ENCODE measurements at regions of chr19 and their contacts with region 1.

Region 1: DNA sequence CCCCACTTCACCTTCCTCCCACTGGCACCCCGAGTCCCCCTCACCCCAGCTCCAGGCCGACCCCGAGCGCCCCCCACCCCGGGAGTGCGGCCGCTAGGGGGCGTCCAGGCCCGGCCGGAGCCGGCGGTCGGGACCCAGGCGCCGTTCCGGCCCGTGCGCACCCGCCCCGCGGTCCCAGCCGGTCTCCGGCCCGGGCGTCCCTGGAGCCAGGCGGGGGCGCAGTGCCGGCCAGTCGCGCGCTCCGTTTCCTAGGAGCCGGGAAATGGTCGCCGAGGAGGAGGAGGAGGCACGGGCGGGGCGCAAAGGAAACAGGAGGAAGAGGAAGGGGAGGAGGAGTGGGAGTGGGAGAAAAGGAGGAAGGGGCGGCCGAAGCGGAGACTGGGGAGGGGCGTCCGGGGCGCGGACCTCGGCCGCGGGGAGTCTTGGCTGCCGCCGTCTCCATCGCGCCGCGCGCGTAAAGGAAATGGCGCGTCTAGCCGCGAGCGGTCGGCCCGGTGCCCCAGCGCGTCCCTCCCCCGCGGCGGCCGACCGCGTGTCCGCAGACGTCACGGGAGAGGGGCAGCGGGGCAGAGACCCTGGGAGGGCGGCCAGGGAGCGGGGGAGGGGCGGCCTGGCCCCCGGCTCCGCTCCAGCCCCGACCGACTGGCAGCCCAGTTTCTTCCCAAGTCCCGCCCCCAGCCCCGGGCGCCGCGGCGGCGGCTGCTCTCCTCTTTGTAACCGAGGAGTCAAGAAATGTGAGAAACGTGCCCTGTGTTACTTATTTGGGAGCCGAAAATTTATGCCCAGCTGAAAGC is 1.1 kb upstream of the KCTD15 start:
- DNase-seq: peak; percentile 64
- H3K4me3 Mint-ChIP-seq: peak overlapping the region; percentile 71
- H3K27ac Mint-ChIP-seq: peak overlapping the region; percentile 63
- H3K4me1 Mint-ChIP-seq: peaks cover 17% of the 10 kb centered on the region
- H3K27me3 Mint-ChIP-seq: peaks cover 28% of the 10 kb centered on the region

Region 2: GRCh38 chr19:33819880-33820781 is 24.6 kb after region 1 on chr19:
- CTCF ChIA-PET with region 1: interaction called, 20 read pairs
- POLR2A ChIA-PET with region 1: interaction called, 75 read pairs
- DNase-seq: peak; percentile 89
- H3K4me3 Mint-ChIP-seq: peak overlapping the region; percentile 80
- H3K27ac Mint-ChIP-seq: peak overlapping the region; percentile 88
- H3K4me1 Mint-ChIP-seq: peaks cover 53% of the 10 kb centered on the region
- H3K27me3 Mint-ChIP-seq: no peaks in the 10 kb centered on the region

Region 3: DNA sequence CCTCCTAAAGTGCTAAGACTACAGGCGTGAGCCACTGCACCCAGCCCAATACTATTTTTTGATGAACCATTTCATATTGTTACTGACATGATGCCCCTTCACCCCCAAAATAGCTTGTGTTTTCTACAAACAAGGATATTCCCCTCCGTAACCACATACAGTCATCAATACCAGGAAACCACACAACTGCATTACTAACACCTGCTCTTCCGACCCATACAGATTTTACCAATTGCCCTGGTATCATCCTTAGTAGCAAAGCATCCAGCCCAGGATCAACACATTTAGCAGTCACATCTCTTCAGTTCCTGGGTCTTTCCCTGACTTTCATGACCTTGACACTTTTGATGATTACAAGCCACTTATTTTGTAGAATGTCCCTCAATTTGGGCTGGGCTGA is 34.7 kb after region 1 on chr19:
- CTCF ChIA-PET with region 1: no interaction called
- POLR2A ChIA-PET with region 1: no interaction called
- DNase-seq: peak; percentile 10
- H3K4me3 Mint-ChIP-seq: no peak overlapping the region
- H3K27ac Mint-ChIP-seq: no peak overlapping the region
- H3K4me1 Mint-ChIP-seq: peaks cover 10% of the 10 kb centered on the region
- H3K27me3 Mint-ChIP-seq: peaks cover 18% of the 10 kb centered on the region

Region 4: DNA sequence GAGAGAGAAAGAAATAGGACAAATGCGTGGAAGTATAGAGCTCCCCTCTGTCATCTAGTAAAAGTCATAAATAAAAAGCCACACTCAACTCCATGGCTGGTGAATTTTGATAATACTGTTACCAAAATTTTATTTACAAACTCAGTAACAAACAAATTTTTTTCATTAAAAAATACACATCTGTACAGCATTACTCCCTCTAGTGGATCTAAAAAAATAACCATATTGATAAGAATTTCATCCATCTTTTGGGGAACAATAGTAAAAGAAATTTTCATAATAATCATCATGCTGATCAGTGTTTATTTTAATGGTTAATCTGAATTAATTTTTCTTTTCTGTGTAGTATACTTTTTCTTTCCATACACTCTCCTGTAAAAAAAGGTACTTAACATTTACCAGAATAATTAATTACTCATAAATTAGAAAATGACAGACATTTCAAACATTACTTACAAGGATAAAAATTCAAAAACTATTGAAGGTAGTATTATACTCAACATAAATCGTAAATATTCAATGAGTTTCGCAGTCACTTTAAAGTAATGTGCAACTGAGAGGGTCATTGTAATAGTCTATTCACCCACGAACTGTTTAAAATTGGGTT is 203.3 kb after region 1 on chr19:
- CTCF ChIA-PET with region 1: interaction called, 15 read pairs
- POLR2A ChIA-PET with region 1: no interaction called
- DNase-seq: no peak
- H3K4me3 Mint-ChIP-seq: no peak overlapping the region
- H3K27ac Mint-ChIP-seq: no peak overlapping the region
- H3K4me1 Mint-ChIP-seq: no peaks in the 10 kb centered on the region
- H3K27me3 Mint-ChIP-seq: peaks cover 12% of the 10 kb centered on the region